Activated CD8-positive, alpha-beta memory T cell treated with anti-CD3 and anti-CD28 coated beads, Interleukin-2, amount 10 ng/mL, durations not matched to agents 7 days and 5 days (primary cell): ENCODE measurements at regions of chr22 and their contacts with region 1.

Region 1: DNA sequence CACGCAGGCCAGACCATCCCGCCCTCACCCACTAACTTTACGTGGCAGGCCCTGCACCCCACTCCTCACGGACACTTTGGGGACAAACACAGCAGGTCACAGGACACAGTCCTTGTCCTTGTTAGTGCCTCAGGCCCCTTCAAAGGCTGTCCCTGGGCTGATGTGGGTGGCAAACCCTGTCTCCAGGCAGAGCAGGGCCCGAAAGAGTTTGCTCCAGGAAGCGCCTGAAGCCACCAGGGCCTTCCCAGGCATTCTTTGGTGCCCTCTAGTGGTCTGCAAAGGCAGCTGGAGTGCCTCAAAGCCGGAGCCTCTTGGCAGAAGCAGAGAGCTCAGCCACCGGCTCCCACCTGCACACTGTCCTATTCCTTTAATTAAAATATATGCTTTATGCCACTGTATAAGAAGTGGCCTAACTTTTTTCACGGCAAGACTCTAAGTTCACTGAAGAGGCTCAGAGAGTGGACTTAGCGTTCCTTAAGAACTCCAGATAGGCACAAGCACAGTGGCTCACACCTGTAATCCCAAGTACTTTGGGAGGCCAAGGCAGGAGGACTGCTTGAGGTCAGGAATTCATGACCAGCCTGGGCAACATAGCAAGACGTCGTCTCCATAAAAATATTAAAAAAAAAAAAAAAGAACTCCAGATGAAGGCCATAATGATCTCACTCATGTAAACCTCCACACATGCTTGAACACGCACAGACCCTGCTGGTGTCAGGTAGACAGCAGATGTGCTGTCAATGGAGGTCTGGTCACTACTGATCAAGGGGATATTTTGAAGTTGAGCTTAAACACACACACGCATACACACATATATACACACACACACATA is 11.1 kb downstream of the TXN2 start:
- DNase-seq: peak; percentile 91
- ATAC-seq: peak; percentile 95
- H3K4me3 Mint-ChIP-seq: no peak overlapping the region
- H3K27ac Mint-ChIP-seq: peak overlapping the region; percentile 76
- H3K4me1 Mint-ChIP-seq: peaks cover 35% of the 10 kb centered on the region
- H3K27me3 Mint-ChIP-seq: no peaks in the 10 kb centered on the region

Region 2: GRCh38 chr22:36291831-36292740 is 178.3 kb before region 1 on chr22:
- CTCF ChIA-PET with region 1: interaction called, 12 read pairs
- DNase-seq: no peak
- ATAC-seq: no peak
- H3K4me3 Mint-ChIP-seq: no peak overlapping the region
- H3K27ac Mint-ChIP-seq: peak overlapping the region; percentile 66
- H3K4me1 Mint-ChIP-seq: peaks cover 57% of the 10 kb centered on the region
- H3K27me3 Mint-ChIP-seq: no peaks in the 10 kb centered on the region

Region 3: DNA sequence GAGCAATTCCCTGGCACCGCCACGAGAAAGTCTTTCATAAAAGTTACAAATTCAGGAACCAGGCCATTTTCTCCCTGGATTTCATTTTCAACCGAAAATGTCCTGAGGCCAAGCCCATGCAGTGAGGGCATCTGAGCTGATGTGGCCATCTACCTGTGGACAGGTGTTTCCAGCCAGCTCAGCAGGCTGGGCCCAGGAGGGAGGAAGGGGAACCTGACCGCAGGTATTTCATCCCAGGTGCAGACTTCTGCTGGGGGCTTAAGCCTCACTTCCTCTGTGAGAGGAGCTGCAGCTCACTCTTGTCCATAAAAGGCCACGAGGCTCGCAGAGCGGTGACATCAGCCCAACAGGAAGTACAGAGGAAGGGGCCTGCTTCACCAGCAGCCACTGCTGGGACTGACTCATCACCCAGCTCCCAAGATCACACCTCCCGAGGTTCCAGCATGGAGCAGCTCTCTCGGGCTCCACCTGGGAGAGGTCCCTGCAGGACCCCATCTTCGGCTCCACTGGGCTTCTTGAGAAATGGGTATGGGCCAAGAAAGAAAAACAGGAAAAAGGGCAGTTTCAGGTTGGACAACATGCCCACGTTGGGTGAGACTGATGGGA is 139.0 kb before region 1 on chr22:
- CTCF ChIA-PET with region 1: interaction called, 11 read pairs
- DNase-seq: peak; percentile 94
- ATAC-seq: peak; percentile 61
- H3K4me3 Mint-ChIP-seq: peak overlapping the region; percentile 77
- H3K27ac Mint-ChIP-seq: peak overlapping the region; percentile 99
- H3K4me1 Mint-ChIP-seq: peaks cover 98% of the 10 kb centered on the region
- H3K27me3 Mint-ChIP-seq: no peaks in the 10 kb centered on the region

Region 4: GRCh38 chr22:36365020-36365411 is 105.4 kb before region 1 on chr22:
- CTCF ChIA-PET with region 1: interaction called, 15 read pairs
- DNase-seq: peak; percentile 96
- ATAC-seq: peak; percentile 87
- H3K4me3 Mint-ChIP-seq: peak overlapping the region; percentile 45
- H3K27ac Mint-ChIP-seq: peak overlapping the region; percentile 85
- H3K4me1 Mint-ChIP-seq: peaks cover 95% of the 10 kb centered on the region
- H3K27me3 Mint-ChIP-seq: no peaks in the 10 kb centered on the region

Region 5: DNA sequence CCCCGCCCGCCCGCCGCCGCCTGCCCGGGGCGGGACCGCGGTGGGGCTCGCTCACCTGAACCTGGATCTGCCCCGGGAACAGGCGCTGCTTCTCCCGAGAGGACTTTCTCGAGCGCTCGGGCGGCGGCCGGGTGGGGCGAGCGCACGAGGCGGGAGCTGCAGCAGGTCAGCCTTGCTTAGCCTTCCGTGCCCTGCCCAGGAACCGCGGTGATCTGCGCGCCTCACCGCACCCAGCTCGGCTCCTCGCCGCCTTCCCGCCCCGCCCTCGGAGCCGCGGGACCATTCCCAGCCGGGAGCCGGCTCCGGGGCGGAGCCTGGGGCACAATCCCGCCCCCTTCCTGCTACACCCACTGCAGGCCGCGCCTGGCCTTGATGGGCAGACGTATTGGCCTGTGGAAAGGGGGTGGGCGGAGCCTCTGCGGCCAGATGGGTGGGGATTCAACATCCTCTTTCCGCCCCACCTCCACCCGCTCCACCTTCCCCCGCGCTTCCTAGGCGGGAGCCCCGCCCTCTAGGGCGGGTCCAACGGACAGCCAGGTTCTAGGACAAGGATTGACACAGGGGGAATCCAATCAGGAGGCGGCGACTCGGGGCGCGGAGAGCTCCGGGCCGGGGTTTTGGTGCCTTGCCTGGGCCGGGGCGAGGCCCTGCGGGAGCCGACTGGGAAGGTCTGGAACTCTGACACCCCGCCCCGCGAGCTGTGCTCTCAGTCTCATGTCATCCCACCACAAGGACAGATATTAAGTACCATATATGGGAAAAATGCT is 82.4 kb before region 1 on chr22 and contains the start of gene MYH9:
- CTCF ChIA-PET with region 1: interaction called, 16 read pairs
- DNase-seq: peak; percentile 100
- ATAC-seq: peak; percentile 86
- H3K4me3 Mint-ChIP-seq: peak within 1 kb of the TSS; percentile 88
- H3K27ac Mint-ChIP-seq: peak within 1 kb of the TSS; percentile 92
- H3K4me1 Mint-ChIP-seq: peaks cover 38% of the 10 kb centered on the region
- H3K27me3 Mint-ChIP-seq: no peaks in the 10 kb centered on the region
- total RNA-seq, gene MYH9: 695 to 913 TPM

Region 6: DNA sequence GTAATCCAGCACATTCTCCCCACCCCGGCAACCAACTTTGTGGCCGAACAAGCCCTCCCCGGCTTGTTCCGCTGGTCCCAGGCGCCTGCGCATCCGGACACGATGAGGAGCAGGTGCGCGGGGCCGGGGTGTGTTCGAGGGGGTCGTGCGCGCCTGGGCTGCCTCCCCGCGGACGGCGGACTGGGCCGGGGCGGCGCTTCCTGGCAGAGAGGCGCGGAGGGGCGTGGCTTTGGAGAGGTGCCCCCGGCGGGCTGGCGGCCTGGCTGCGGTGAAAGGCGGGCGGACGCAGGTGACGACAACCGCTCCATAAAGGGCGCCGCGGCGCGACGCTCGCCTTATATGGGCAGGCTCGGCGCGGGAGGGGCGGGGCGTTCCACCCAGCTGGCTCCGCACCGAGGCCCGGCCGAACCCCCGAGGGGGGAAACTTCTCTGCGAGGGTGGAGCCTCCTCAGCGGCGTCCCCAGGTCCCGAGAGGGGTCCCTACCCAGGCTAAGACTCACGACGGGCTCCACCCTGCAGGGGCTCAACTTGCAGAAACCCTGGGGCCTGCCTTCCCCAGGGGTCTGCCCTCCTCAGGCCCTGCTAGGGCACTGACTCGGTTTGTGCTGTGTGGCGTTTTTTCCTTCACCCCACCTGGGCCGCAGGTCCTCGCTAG is 15.3 kb before region 1 on chr22:
- CTCF ChIA-PET with region 1: interaction called, 22 read pairs
- DNase-seq: peak; percentile 98
- ATAC-seq: peak; percentile 81
- H3K4me3 Mint-ChIP-seq: peak overlapping the region; percentile 69
- H3K27ac Mint-ChIP-seq: peak overlapping the region; percentile 93
- H3K4me1 Mint-ChIP-seq: peaks cover 61% of the 10 kb centered on the region
- H3K27me3 Mint-ChIP-seq: no peaks in the 10 kb centered on the region

Region 7: GRCh38 chr22:36497910-36498665 is 27.7 kb after region 1 on chr22:
- CTCF ChIA-PET with region 1: no interaction called
- DNase-seq: no peak
- ATAC-seq: no peak
- H3K4me3 Mint-ChIP-seq: no peak overlapping the region
- H3K27ac Mint-ChIP-seq: no peak overlapping the region
- H3K4me1 Mint-ChIP-seq: no peaks in the 10 kb centered on the region
- H3K27me3 Mint-ChIP-seq: no peaks in the 10 kb centered on the region

Region 8: GRCh38 chr22:36636916-36637315 is 166.5 kb after region 1 on chr22:
- CTCF ChIA-PET with region 1: no interaction called
- DNase-seq: no peak
- ATAC-seq: no peak
- H3K4me3 Mint-ChIP-seq: no peak overlapping the region
- H3K27ac Mint-ChIP-seq: no peak overlapping the region
- H3K4me1 Mint-ChIP-seq: no peaks in the 10 kb centered on the region
- H3K27me3 Mint-ChIP-seq: peaks cover 51% of the 10 kb centered on the region